ENCODE measurements at regions of chr17 and their contacts with region 1.

Region 1: GRCh38 chr17:41880130-41880529 is 14.9 kb upstream of the KLHL11 start:
- DNase-seq: no peak
- ATAC-seq: no peak
- H3K4me3 Mint-ChIP-seq: no peak overlapping the region
- H3K27ac Mint-ChIP-seq: no peak overlapping the region
- H3K4me1 Mint-ChIP-seq: no peaks in the 10 kb centered on the region
- H3K27me3 Mint-ChIP-seq: no peaks in the 10 kb centered on the region
- CTCF ChIP-seq: no peak

Region 2: DNA sequence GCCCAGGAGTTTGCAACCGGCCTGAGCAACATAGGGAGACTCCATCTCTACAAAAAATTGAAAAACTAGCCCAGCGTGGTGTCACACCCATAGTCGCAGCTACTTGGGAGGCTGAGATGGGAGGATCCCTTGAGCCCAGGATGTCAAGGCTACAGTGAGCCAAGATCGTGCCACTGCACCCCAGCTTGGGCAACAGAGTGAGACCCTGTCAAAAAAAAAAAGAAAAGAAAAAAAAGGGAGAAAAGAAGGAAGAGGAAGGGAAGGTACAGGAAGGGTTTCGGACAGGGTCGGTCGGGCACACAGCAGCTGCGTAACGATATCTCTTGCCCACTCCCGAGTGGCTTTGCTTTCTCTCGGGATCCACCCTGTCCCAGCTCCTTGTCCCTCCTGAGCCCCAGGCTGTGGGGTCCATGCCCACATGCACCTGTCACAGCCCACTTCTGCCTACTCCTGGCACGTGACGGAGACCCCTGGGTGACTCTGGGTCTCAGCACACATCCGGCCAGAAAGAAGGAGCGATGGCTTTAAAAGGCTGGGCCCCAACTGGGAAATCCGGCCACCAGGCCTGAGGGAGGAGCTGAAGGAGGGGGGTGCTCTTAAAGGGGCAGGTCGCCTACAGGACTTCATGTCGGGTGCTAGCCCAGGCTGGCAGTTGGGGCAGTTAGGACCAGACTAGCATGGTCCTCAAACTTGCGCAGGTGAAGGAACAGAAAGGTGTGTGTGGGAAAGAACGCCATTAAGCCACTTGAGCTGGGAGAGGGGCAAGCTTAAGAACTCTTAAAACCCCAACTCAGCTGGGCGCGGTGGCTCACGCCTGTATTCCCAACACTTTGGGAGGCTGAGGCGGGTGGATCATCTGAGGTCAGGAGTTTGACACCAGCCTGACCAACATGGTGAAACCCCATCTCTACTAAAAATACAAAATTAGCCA is 314.1 kb after region 1 on chr17 and contains the start of gene GHDC:
- CTCF ChIA-PET with region 1: no interaction called
- POLR2A ChIA-PET with region 1: interaction called, 11 read pairs
- intact Hi-C with region 1: no loop called
- DNase-seq: peak; percentile 74
- ATAC-seq: peak; percentile 90
- H3K4me3 Mint-ChIP-seq: peak within 1 kb of the TSS; percentile 98
- H3K27ac Mint-ChIP-seq: peak within 1 kb of the TSS; percentile 96
- H3K4me1 Mint-ChIP-seq: peaks cover 33% of the 10 kb centered on the region
- H3K27me3 Mint-ChIP-seq: no peaks in the 10 kb centered on the region
- CTCF ChIP-seq: no peak
- total RNA-seq, gene GHDC: 26.5 and 29.1 TPM in 2 replicates

Measured in activated B cell treated with CpG ODN at 0.5 μM for 24 hours (primary cell).